ENCODE measurements at regions of chr7 and their contacts with region 1.

Region 1: GRCh38 chr7:85010306-85010705 is 176.6 kb downstream of the SEMA3D start:
- DNase-seq: no peak
- CTCF ChIP-seq: no peak

Region 2: GRCh38 chr7:85023045-85023712 is 12.9 kb after region 1 on chr7:
- CTCF ChIA-PET with region 1: interaction called, 21 read pairs
- POLR2A ChIA-PET with region 1: no interaction called
- DNase-seq: peak; percentile 3
- CTCF ChIP-seq: peak; percentile 56

Measured in GM10248 (cell line).